PC-3 (cell line): ENCODE measurements at regions of chr5 and their contacts with region 1.

Region 1: DNA sequence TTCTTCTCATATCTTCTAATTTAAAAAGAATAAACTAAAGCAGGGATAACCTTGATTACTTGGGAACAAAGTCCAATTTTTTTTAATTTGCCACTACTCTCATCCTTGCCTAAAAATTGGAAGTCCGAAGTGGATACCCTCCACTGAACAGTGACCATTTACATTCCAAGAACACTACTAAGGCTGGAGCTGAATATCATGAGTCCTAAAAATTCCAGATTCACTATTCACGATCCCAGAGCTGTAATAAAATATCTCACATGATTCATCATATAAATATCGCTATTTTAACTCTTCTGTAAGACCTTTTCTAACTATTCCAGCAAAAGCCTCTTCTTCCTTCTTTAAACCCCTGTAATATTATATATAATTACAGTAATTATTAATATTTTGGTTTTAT is 57.4 kb downstream of the ATPSCKMT start:
- DNase-seq: peak; percentile 82
- ATAC-seq: peak; percentile 94
- H3K4me3 ChIP-seq: no peak overlapping the region
- H3K27ac ChIP-seq: no peak overlapping the region
- H3K4me1 ChIP-seq: peaks cover 7% of the 10 kb centered on the region
- H3K27me3 ChIP-seq: no peaks in the 10 kb centered on the region
- CTCF ChIP-seq: no peak

Region 2: GRCh38 chr5:8943301-8943700 is 1249.0 kb before region 1 on chr5:
- CTCF ChIA-PET with region 1: no interaction called
- POLR2A ChIA-PET with region 1: interaction called, 15 read pairs
- intact Hi-C with region 1: no loop called
- DNase-seq: peak; percentile 44
- ATAC-seq: peak; percentile 15
- H3K4me3 ChIP-seq: peak overlapping the region; percentile 6; the same call in 1 of the 2 replicates
- H3K27ac ChIP-seq: peak overlapping the region; percentile 58
- H3K4me1 ChIP-seq: peaks cover 18% of the 10 kb centered on the region
- H3K27me3 ChIP-seq: no peaks in the 10 kb centered on the region
- CTCF ChIP-seq: no peak

Region 3: DNA sequence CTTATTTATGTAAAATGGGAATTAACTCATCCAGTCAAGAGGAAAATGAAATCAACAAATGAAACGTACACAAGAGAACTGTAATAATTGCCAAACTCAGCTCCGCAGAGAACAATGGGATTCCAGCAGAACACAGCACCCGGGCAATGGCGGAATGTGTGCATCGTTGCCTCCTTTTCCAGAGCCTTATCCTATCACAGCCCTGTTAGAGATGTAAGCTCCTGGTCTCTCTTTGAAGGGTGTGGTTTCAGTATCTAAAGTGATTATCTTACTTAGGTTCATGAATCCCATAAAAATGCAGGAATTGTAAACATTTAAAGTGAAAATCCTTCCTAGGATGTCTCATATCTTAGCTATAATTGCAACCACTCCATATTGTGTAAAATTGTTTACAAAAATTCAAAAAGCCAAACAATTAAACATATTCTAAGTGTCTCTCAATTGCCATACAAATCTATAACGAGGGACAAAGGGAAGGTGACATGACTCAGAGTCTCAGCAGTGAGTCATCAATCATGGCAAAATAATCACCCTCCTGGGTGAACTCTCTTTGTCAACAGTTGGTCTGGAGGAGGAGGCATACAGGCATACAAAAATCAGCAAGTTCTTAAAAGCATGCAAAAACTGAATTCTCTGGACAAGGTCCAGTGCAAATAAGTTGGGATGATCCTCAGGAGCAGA is 669.1 kb before region 1 on chr5:
- CTCF ChIA-PET with region 1: no interaction called
- POLR2A ChIA-PET with region 1: interaction called, 13 read pairs
- intact Hi-C with region 1: no loop called
- DNase-seq: peak; percentile 95
- ATAC-seq: peak; percentile 95
- H3K4me3 ChIP-seq: no peak overlapping the region
- H3K27ac ChIP-seq: peak overlapping the region; percentile 13; the same call in 1 of the 2 replicates
- H3K4me1 ChIP-seq: peaks cover 21% of the 10 kb centered on the region
- H3K27me3 ChIP-seq: no peaks in the 10 kb centered on the region
- CTCF ChIP-seq: no peak

Region 4: GRCh38 chr5:10249948-10250803 is 57.9 kb after region 1 on chr5 and contains the start of gene CCT5:
- CTCF ChIA-PET with region 1: no interaction called
- POLR2A ChIA-PET with region 1: no interaction called
- intact Hi-C with region 1: no loop called
- DNase-seq: peak; percentile 99
- ATAC-seq: peak; percentile 64
- H3K4me3 ChIP-seq: peak within 1 kb of the TSS; percentile 91
- H3K27ac ChIP-seq: peak within 1 kb of the TSS; percentile 82
- H3K4me1 ChIP-seq: peaks cover 31% of the 10 kb centered on the region
- H3K27me3 ChIP-seq: no peaks in the 10 kb centered on the region
- CTCF ChIP-seq: no peak
- total RNA-seq, gene CCT5: 1,309 and 1,334 TPM in 2 replicates

Region 5: DNA sequence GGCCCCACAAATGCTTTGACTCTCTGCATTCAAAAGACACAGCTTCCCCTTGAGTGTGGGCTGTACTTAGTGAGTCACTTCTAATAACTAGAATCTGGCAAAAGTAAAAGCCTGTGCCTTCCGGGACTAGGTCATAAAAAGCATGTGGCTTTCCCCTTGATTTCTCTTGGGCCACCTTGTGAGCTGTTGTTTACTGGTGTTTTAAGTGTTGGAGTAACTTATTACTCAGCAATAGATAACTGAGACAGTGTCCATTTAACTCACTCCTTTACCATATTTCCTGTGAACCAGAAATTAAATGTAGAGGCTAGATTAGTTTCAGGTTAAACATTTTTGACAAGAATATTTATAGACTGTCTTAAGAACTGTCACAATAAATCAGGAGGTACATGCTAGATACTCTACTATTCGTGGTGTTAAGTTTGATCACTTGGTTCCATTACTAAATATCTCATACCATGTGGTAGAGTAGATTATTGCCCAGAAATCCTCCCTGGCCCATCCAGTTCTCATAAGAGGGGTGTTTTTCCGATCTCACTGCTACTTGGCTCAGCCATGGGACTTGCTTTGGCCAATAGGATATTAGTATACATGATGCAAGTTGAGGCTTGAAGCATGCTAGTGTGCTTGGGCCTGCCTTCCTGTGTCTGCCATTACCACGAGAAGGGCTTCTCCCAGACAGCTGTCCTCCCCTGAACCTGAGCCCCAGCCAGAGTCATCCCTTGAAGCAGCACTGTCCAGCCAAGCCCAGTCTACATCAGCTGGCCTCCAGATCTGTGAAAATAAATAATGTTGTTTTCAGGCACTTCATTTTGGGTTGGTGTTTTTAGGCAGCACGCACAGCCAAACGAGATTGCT is 125.7 kb after region 1 on chr5:
- CTCF ChIA-PET with region 1: no interaction called
- POLR2A ChIA-PET with region 1: no interaction called
- intact Hi-C with region 1: no loop called
- DNase-seq: peak; percentile 93
- ATAC-seq: peak; percentile 95
- H3K4me3 ChIP-seq: no peak overlapping the region
- H3K27ac ChIP-seq: peak overlapping the region; percentile 52
- H3K4me1 ChIP-seq: peaks cover 11% of the 10 kb centered on the region
- H3K27me3 ChIP-seq: no peaks in the 10 kb centered on the region
- CTCF ChIP-seq: no peak

Region 6: DNA sequence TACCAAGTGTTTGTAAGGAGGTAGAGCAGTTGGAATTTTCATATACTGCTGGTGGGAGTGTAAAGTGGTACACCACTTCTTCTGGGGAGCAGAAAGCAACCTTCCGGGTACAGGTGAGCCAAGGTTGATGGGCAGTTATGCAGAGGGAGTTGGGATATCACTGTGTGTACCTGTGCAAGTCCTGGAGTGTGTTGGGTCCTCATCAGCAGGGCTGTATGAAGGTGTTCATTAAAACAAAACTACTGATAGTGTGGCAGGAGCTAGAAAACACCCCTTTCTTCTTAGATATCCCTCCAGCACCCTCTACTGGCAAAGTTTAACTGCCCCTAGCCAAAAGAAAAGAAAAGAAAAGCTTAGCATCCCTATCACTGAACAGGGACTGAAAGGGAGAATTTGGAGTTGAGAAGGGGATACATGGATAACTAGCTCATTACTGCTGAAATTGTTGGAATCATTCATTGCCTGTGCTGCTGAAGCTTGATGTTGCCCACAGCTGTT is 171.9 kb after region 1 on chr5:
- CTCF ChIA-PET with region 1: no interaction called
- POLR2A ChIA-PET with region 1: no interaction called
- intact Hi-C with region 1: no loop called
- DNase-seq: peak; percentile 80
- ATAC-seq: peak; percentile 26; the same call in 1 of the 2 replicates
- H3K4me3 ChIP-seq: no peak overlapping the region
- H3K27ac ChIP-seq: no peak overlapping the region
- H3K4me1 ChIP-seq: peaks cover 13% of the 10 kb centered on the region
- H3K27me3 ChIP-seq: no peaks in the 10 kb centered on the region
- CTCF ChIP-seq: peak; percentile 91